MCF 10A (cell line): ENCODE measurements at regions of chrX and their contacts with region 1.

Region 1: GRCh38 chrX:130563476-130563875 is 161.7 kb downstream of the RBMX2 start:
- DNase-seq: no peak
- H3K4me3 Mint-ChIP-seq: no peak overlapping the region
- H3K27ac Mint-ChIP-seq: no peak overlapping the region
- H3K4me1 Mint-ChIP-seq: no peaks in the 10 kb centered on the region
- H3K27me3 Mint-ChIP-seq: peaks cover 30% of the 10 kb centered on the region
- CTCF ChIP-seq: no peak

Region 2: DNA sequence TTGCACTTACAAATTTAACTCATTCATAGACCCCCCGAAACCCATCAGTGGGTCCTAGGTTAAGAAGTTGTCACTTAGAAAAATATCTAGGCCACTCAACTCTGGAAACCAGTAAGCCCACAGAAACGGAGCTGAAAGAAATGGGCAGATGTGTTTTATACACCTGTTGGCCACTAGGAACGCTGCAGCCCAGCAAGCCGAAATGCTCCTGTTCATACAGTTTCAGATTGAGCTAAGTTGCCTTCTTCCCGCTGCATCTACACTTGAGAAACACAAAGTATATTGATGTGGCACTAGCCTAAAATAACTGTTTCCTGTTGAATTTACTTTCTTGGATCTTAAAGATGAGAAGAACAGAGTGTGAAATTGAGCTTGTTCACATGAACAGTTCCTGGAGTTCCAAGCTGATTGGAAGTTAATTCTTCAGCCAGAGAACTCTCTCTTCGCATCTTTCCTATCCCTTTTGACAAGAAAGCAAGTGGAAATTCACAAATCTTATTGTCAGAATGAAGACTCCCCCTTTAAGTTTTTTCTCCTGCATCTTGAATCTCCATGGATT is 12.4 kb after region 1 on chrX:
- CTCF ChIA-PET with region 1: interaction called, 13 read pairs
- POLR2A ChIA-PET with region 1: no interaction called
- intact Hi-C with region 1: no loop called
- DNase-seq: peak; percentile 58
- H3K4me3 Mint-ChIP-seq: no peak overlapping the region
- H3K27ac Mint-ChIP-seq: no peak overlapping the region
- H3K4me1 Mint-ChIP-seq: no peaks in the 10 kb centered on the region
- H3K27me3 Mint-ChIP-seq: peaks cover 42% of the 10 kb centered on the region
- CTCF ChIP-seq: peak; percentile 72